Caki2 (cell line): ENCODE measurements at regions of chr1 and their contacts with region 1.

Region 1: DNA sequence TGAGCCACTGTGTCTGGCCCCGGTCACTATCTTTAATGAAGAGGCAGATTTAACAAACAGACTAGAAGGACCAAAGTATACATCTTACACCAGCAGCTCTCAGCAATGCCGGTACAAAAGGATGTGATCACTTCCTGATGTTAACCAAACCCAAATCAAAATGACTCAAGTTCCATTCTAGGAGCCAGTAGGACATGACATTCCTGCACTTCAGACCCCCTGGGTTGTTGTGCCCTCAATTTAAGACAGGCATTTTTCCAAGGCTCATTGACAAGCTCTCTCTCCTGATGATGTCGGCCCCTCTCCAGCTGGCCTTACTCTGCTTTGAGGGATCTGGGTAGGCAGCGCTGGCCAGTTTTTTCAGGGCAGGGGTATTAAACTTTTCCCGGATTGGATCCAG is 35.1 kb downstream of the YARS1 start:
- DNase-seq: no peak

Region 2: GRCh38 chr1:32714277-32714676 is 67.8 kb before region 1 on chr1:
- in situ Hi-C with region 1: loop called (anchors 5 kb)
- DNase-seq: no peak